HepG2 (cell line): ENCODE measurements at regions of chr12 and their contacts with region 1.

Region 1: GRCh38 chr12:94182986-94183687 is 34.8 kb downstream of the PLXNC1 start:
- DNase-seq: peak; percentile 90
- ATAC-seq: peak; percentile 71
- H3K4me3 ChIP-seq: peak overlapping the region; percentile 3 to 51 (median 7); a peak in 2 of 6 replicates
- H3K27ac ChIP-seq: peak overlapping the region; percentile 85
- H3K4me1 ChIP-seq: peaks cover 64% of the 10 kb centered on the region
- H3K27me3 ChIP-seq: no peaks in the 10 kb centered on the region
- CTCF ChIP-seq: no peak
- EP300 ChIP-seq: no peak
- POLR2A ChIP-seq: no peak
- RAD21 ChIP-seq: no peak; the same call in 1 of the 2 replicates

Region 2: DNA sequence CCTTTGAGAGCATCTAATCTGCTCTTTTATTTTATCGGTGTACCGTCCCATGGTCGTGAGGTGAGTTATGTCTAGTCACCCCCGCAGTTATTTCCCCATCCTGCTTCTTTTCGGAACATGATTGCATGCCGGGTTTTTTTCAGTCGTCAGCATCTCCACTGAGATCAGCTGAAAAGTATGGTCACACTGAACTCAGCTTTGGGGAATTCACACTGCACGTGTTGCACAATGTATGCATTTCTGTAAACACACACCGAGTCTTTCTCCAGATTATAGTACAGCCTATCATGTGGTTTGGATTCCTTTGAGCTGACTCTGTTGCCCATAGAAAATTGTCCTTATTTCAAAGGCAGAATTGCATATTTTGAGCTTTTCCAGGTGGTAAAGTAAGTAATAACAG is 10.2 kb before region 1 on chr12:
- CTCF ChIA-PET with region 1: interaction called, 4 read pairs
- POLR2A ChIA-PET with region 1: interaction called, 36 read pairs
- in situ Hi-C with region 1: no loop called
- intact Hi-C with region 1: loop called (anchors 1 kb)
- DNase-seq: peak; percentile 94
- ATAC-seq: peak; percentile 93
- H3K4me3 ChIP-seq: no peak overlapping the region
- H3K27ac ChIP-seq: peak overlapping the region; percentile 59
- H3K4me1 ChIP-seq: peaks cover 60% of the 10 kb centered on the region
- H3K27me3 ChIP-seq: no peaks in the 10 kb centered on the region
- CTCF ChIP-seq: no peak
- EP300 ChIP-seq: peak; percentile 81 to 85
- POLR2A ChIP-seq: no peak
- RAD21 ChIP-seq: no peak

Region 3: GRCh38 chr12:94202245-94203180 is 19.4 kb after region 1 on chr12:
- CTCF ChIA-PET with region 1: no interaction called
- POLR2A ChIA-PET with region 1: interaction called, 24 read pairs
- in situ Hi-C with region 1: no loop called
- intact Hi-C with region 1: loop called (anchors 1 kb)
- DNase-seq: peak; percentile 64
- ATAC-seq: peak; percentile 68
- H3K4me3 ChIP-seq: no peak overlapping the region
- H3K27ac ChIP-seq: peak overlapping the region; percentile 2
- H3K4me1 ChIP-seq: peaks cover 60% of the 10 kb centered on the region
- H3K27me3 ChIP-seq: no peaks in the 10 kb centered on the region
- CTCF ChIP-seq: no peak
- EP300 ChIP-seq: no peak
- POLR2A ChIP-seq: no peak
- RAD21 ChIP-seq: no peak

Region 4: DNA sequence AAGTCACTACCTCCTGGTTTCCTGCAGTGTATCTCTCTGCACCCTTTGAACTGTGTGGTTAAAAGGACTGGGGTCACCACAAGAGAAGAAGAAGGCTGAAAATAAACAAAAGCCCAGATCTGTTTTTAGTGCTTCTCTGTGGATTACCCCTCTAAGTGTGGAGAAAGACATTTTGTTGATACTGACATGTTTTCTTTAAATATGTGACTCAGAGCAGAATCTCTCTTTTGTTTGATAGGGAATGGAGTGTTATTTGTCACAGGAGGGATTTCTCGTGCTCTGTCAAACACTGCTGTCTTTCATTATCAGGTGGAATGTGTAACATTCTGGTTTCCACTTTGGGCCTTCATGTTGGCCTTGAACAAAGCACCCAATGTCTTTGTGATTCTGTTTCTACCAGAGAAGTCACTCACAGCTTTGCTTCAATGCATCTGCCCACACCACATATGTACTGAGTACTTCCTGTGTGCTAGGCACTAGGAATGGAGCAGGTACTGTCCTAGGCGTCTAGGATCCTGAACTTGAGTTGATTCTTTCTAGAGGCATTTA is 47.3 kb after region 1 on chr12:
- CTCF ChIA-PET with region 1: no interaction called
- POLR2A ChIA-PET with region 1: interaction called, 3 read pairs
- in situ Hi-C with region 1: no loop called
- intact Hi-C with region 1: loop called (anchors 1 kb)
- DNase-seq: peak; percentile 99
- ATAC-seq: peak; percentile 97
- H3K4me3 ChIP-seq: peak overlapping the region in 1 of 3 experiments; percentile 4; a peak in 1 of 6 replicates
- H3K27ac ChIP-seq: peak overlapping the region; percentile 82
- H3K4me1 ChIP-seq: peaks cover 49% of the 10 kb centered on the region
- H3K27me3 ChIP-seq: no peaks in the 10 kb centered on the region
- CTCF ChIP-seq: no peak
- EP300 ChIP-seq: peak in 1 of 2 experiments; percentile 90; a peak in 2 of 4 replicates
- POLR2A ChIP-seq: 0 out of 4 replicates have a peak, but pooled peaks of 1 of the 2 experiments have one; percentile 33
- RAD21 ChIP-seq: no peak; the same call in 1 of the 2 replicates